Endothelial cell of umbilical vein (primary cell): ENCODE measurements at regions of chr18 and their contacts with region 1.

Region 1: DNA sequence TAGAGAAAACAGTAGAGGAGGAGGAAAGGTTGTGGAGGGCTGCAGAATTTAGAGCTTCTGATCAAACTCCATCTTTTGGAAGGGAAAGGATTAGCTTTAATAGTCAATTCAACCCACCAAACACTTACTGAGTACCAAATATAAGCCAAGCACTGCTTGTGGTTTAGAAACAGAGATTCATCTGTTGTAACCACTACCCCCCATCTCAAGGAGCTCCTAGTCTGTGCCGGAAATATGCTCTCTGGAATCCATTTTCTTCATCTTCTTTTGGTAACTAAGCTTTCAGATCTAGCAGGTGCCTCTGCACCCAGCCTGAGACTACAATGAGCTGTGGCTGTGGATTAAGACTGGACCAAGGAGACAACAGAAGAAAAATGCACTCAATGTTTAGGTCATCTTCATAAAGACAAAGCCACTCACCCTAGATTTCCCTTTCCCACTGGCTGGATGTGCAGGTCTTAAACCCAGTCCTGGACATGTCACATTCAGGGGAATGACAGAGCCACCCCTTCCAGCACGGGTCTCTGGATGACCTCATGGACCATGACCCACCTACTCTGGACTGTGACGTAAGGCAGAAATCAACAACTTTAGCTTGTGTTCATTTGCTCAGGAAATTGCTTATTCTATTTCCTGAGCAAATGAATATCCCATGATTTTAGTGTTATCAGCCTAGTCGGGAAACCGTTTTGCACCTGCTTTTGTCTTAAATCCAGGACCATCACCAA is 52.9 kb downstream of the EPB41L3 start:
- DNase-seq: peak; percentile 46
- H3K4me3 ChIP-seq: no peak overlapping the region
- H3K27ac ChIP-seq: no peak overlapping the region
- H3K4me1 ChIP-seq: no peaks in the 10 kb centered on the region
- H3K27me3 ChIP-seq: no peaks in the 10 kb centered on the region
- CTCF ChIP-seq: no peak
- POLR2A ChIP-seq: no peak

Region 2: GRCh38 chr18:5476961-5477723 is 13.8 kb before region 1 on chr18:
- CTCF ChIA-PET with region 1: interaction called, 15 read pairs
- POLR2A ChIA-PET with region 1: no interaction called
- dilution Hi-C with region 1: no loop called
- intact Hi-C with region 1: no loop called
- DNase-seq: peak; percentile 44
- H3K4me3 ChIP-seq: no peak overlapping the region
- H3K27ac ChIP-seq: no peak overlapping the region
- H3K4me1 ChIP-seq: peaks cover 6% of the 10 kb centered on the region
- H3K27me3 ChIP-seq: no peaks in the 10 kb centered on the region
- CTCF ChIP-seq: no peak
- POLR2A ChIP-seq: no peak

Region 3: DNA sequence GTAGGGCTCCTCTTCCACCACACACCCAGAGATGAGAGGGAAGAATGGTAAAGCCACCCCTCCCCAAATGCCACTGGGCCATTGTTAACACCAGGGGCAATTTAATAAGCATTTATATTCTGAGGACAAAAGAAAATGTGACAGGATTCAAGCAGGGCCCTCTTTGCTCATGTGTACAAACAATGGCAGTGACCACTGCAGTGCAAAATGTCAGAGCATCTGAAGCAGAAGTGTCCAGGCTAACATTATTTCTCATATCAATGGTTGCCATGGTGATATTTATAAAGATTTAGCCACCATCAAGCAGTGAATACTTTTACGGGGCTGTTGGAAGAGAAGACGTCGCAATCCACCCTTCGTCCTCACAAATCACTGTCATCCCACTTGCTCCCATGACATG is 63.7 kb after region 1 on chr18:
- CTCF ChIA-PET with region 1: no interaction called
- POLR2A ChIA-PET with region 1: no interaction called
- dilution Hi-C with region 1: no loop called
- intact Hi-C with region 1: no loop called
- DNase-seq: no peak
- H3K4me3 ChIP-seq: no peak overlapping the region
- H3K27ac ChIP-seq: no peak overlapping the region
- H3K4me1 ChIP-seq: no peaks in the 10 kb centered on the region
- H3K27me3 ChIP-seq: no peaks in the 10 kb centered on the region
- CTCF ChIP-seq: no peak
- POLR2A ChIP-seq: no peak